Calu3 (cell line): ENCODE measurements at regions of chr22 and their contacts with region 1.

Region 1: DNA sequence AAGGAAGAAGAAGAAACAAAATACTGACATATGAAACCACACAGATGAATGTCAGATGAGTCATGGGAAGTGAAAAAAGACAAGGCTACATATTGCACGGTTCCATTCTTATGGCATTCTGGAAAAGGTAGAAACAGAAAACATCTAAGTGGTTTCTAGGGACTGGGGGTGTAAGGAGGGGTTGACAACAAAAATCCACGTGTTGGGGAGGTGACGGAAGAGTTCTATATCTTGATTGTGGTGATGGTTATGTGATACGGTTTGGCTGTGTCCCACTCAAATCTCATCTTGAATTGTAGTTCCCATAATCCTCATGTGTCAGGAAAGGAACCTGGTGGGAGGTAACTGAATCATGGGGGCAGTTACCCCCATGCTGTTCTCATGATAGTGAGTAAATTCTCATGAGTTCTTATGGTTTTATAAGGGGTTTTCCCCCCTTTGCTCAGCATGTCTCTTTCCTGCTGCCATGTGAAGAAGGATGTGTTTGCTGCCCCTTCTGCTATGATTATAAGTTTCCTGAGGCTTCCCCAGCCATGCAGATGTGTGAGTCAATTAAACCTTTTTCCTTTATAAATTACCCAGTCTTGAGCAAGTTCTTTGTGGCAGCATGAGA is 6.4 kb upstream of the ARFGAP3 start:
- DNase-seq: peak; percentile 43
- H3K4me3 Mint-ChIP-seq: peak overlapping the region; percentile 3
- H3K27ac Mint-ChIP-seq: peak overlapping the region; percentile 66
- H3K4me1 Mint-ChIP-seq: peaks cover 44% of the 10 kb centered on the region
- H3K27me3 Mint-ChIP-seq: no peaks in the 10 kb centered on the region
- CTCF ChIP-seq: no peak

Region 2: DNA sequence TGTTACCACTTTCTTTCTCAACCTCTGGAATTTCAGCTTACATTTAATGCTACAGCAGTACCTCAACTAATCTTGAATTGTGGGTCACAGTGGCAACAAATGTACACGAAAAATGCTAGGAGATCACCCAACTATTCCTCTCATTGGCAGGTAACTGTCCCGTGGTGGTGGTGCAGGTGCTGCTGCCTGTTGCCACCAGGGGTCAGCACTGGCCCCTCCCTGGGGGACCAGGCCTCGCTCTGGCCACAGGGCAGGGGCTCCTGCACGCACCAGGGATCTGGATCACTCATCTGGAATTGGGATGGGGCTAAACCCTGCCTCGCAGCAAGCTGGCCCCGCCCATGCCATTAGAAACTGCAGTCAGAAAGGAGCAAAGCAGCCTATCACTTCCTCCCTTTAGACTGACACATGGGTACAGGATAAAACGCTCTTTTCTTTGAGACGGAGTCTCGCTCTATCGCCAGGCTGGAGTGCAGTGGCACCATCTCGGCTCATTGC is 241.9 kb before region 1 on chr22:
- CTCF ChIA-PET with region 1: interaction called, 14 read pairs
- intact Hi-C with region 1: no loop called
- DNase-seq: peak; percentile 87
- H3K4me3 Mint-ChIP-seq: no peak overlapping the region
- H3K27ac Mint-ChIP-seq: no peak overlapping the region
- H3K4me1 Mint-ChIP-seq: peaks cover 15% of the 10 kb centered on the region
- H3K27me3 Mint-ChIP-seq: no peaks in the 10 kb centered on the region
- CTCF ChIP-seq: peak; percentile 87

Region 3: DNA sequence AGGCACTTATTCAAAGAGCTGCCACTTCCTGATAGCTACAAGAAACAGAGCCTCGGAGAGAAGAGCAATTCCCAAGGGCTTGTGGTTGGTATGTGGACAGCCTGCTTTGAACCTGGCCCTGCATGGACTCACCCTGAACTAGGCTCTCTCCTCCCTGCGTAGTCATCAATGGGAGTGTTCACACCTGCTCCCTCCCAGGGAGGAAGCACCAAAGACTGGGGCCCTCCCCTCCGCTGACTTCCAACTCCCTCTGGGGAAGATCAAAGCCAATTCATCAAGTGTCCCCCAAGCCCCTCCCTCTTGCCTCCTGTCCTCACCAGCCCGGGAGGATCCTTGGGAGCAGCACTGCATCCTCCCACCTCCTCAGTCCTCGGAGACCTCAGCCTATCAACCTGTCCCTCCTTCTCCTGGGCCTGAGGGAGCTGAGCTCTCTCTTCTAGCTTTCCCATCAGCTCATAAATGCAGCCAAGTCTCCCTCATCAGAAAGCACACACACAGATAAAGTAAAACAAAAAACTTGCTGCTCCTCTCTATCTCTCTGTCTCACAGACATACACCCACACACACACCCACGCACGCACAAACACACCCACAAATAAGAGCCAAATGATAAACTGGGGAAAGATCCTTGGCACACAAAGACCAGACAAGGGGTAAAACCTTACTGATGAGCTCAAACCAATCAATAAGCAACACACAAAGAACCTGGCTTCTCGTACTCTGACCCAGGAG is 146.1 kb before region 1 on chr22:
- CTCF ChIA-PET with region 1: no interaction called
- intact Hi-C with region 1: no loop called
- DNase-seq: no peak
- H3K4me3 Mint-ChIP-seq: no peak overlapping the region
- H3K27ac Mint-ChIP-seq: no peak overlapping the region
- H3K4me1 Mint-ChIP-seq: peaks cover 33% of the 10 kb centered on the region
- H3K27me3 Mint-ChIP-seq: peaks cover 17% of the 10 kb centered on the region
- CTCF ChIP-seq: no peak

Region 4: DNA sequence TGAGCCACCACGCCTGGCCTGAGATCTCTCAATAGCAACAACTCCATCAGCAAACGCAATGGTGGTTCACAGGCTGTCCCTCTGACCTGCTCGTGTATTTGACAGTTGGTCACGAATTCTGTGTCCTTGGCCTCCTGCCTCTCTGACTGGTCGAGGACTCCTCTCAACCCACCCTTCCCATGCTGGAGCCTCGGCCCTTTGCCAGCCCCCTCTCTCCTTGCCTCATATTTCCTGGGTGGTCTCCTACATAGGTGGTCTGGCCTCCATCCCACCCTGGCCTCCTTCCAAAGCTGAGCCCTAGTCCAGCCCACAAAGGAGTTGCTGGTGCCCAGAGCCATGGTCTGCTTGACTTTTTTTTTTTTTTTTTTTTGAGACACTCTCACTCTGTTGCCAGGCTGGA is 131.4 kb before region 1 on chr22:
- CTCF ChIA-PET with region 1: no interaction called
- intact Hi-C with region 1: no loop called
- DNase-seq: no peak
- H3K4me3 Mint-ChIP-seq: no peak overlapping the region
- H3K27ac Mint-ChIP-seq: no peak overlapping the region
- H3K4me1 Mint-ChIP-seq: peaks cover 9% of the 10 kb centered on the region
- H3K27me3 Mint-ChIP-seq: peaks cover 8% of the 10 kb centered on the region
- CTCF ChIP-seq: no peak

Region 5: DNA sequence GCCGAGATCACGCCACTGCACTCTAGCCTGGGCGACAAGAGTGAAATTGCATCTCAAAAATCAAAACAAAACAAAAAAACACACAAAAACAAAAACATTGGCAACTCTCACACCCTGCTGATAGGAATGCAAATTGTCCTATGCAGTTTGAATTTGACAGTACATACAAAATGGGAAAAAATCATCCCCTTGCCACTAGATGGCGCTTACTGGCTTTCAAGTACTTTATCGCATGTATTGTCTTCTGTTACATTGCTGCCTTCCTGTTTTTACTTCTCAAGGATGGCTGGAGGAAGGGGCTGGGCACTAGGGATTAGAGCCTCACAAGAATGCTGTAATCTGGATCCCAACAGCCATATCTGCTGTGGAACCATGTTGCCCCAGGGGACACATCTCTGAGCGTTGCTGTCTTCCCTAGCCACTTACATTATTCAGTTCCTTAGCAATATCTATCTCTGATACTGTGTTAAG is 83.3 kb before region 1 on chr22:
- CTCF ChIA-PET with region 1: interaction called, 5 read pairs
- intact Hi-C with region 1: loop called (anchors 1 kb)
- DNase-seq: peak; percentile 68
- H3K4me3 Mint-ChIP-seq: no peak overlapping the region
- H3K27ac Mint-ChIP-seq: no peak overlapping the region
- H3K4me1 Mint-ChIP-seq: no peaks in the 10 kb centered on the region
- H3K27me3 Mint-ChIP-seq: no peaks in the 10 kb centered on the region
- CTCF ChIP-seq: peak; percentile 83

Region 6: GRCh38 chr22:43014869-43015676 is 151.6 kb after region 1 on chr22 and contains the start of gene PACSIN2:
- CTCF ChIA-PET with region 1: interaction called, 13 read pairs
- intact Hi-C with region 1: no loop called
- DNase-seq: peak; percentile 99
- H3K4me3 Mint-ChIP-seq: peak within 1 kb of the TSS; percentile 69
- H3K27ac Mint-ChIP-seq: peak within 1 kb of the TSS; percentile 98
- H3K4me1 Mint-ChIP-seq: peaks cover 43% of the 10 kb centered on the region
- H3K27me3 Mint-ChIP-seq: no peaks in the 10 kb centered on the region
- CTCF ChIP-seq: no peak
- total RNA-seq, gene PACSIN2: 224 and 230 TPM in 2 replicates